ENCODE measurements at regions of chrX and their contacts with region 1.

Region 1: GRCh38 chrX:16695079-16695676 is 17.3 kb downstream of the CTPS2 start:
- DNase-seq: peak; percentile 65
- ATAC-seq: peak; percentile 98
- H3K4me3 ChIP-seq: no peak overlapping the region
- H3K27ac ChIP-seq: no peak overlapping the region
- H3K4me1 ChIP-seq: no peaks in the 10 kb centered on the region
- H3K27me3 ChIP-seq: no peaks in the 10 kb centered on the region
- CTCF ChIP-seq: peak; percentile 82
- POLR2A ChIP-seq: no peak
- RAD21 ChIP-seq: peak; percentile 78

Region 2: DNA sequence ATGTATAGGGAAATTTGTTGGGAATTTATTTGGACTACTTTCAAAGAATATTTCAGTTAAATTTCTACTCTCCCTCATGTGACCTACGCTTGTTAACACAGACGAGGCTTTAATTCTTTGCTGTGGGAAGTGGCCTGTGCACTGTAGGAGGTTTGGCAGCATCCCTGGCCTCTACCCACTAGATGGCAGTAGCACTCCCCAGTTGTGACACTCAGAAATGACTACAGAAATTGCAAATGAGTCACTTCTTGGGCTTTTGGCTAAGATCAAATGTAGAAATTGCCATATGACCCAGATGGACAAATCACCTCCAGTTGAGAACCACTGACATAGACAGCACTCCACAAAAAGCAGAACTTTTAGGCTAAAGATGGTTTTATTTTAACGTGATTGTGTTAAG is 1224.2 kb before region 1 on chrX:
- CTCF ChIA-PET with region 1: no interaction called
- POLR2A ChIA-PET with region 1: no interaction called
- dilution Hi-C with region 1: no loop called
- in situ Hi-C with region 1: loop called (anchors 25 kb)
- intact Hi-C with region 1: loop called (anchors 10 kb)
- DNase-seq: peak; percentile 65
- ATAC-seq: peak; percentile 83
- H3K4me3 ChIP-seq: no peak overlapping the region
- H3K27ac ChIP-seq: no peak overlapping the region
- H3K4me1 ChIP-seq: peaks cover 2% of the 10 kb centered on the region
- H3K27me3 ChIP-seq: peaks cover 2% of the 10 kb centered on the region
- CTCF ChIP-seq: peak; percentile 81
- POLR2A ChIP-seq: no peak
- RAD21 ChIP-seq: peak; percentile 73

Region 3: GRCh38 chrX:15493118-15493962 is 1201.8 kb before region 1 on chrX and contains the start of gene PIR:
- CTCF ChIA-PET with region 1: no interaction called
- POLR2A ChIA-PET with region 1: no interaction called
- dilution Hi-C with region 1: no loop called
- in situ Hi-C with region 1: loop called (anchors 25 kb)
- intact Hi-C with region 1: no loop called
- DNase-seq: peak; percentile 80
- ATAC-seq: peak; percentile 99
- H3K4me3 ChIP-seq: peak within 1 kb of the TSS; percentile 60
- H3K27ac ChIP-seq: peak within 1 kb of the TSS; percentile 63; the same call in 1 of the 2 replicates
- H3K4me1 ChIP-seq: no peaks in the 10 kb centered on the region
- H3K27me3 ChIP-seq: no peaks in the 10 kb centered on the region
- CTCF ChIP-seq: 0 out of 2 replicates have a peak, but pooled peaks have one; percentile 27
- POLR2A ChIP-seq: no peak; the same call in 1 of the 2 replicates
- RAD21 ChIP-seq: no peak
- total RNA-seq, gene PIR: 5.7 and 5.8 TPM in 2 replicates

Region 4: DNA sequence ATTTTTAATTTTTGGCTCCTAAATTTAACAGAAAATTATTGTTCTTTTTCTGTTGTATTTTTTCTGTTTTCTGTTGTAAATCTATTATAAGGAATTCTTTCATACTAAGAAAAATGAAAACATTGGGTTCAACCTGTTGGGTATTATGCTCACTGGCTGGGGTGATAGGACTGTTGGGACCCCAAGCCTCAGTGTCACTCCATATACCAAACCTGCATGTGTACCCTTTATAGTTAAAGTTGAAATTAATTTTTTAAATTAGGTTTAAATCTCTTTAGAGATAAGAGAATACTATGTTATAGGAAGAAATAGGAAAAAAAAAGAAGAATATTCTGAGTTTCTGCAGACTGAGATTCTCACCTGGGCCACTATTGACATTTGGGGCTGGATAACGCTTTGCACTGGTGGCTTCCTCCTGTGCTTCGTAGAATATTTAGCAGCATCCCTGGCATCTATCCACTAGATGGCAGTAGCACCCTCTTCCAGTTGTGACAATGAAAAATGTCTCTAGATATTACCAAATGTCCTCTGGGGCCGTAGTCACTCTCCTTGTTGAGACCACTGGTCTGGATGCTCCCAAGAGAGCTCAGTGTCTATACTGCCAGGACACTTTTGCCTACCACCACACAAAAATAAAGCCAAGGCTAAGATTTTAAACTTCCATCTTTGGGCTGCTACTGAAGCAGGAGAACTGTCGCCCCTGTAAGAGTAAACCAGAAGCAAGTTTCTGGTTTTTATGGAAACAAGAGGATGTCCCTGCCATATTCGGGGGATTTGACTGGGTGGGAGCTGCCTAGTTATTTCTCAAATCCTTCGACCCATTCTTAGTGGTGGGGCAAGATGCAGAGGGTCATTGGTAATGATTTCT is 1008.1 kb before region 1 on chrX:
- CTCF ChIA-PET with region 1: no interaction called
- POLR2A ChIA-PET with region 1: no interaction called
- dilution Hi-C with region 1: no loop called
- in situ Hi-C with region 1: no loop called
- intact Hi-C with region 1: loop called (anchors 10 kb)
- DNase-seq: peak; percentile 61
- ATAC-seq: peak; percentile 91
- H3K4me3 ChIP-seq: no peak overlapping the region
- H3K27ac ChIP-seq: no peak overlapping the region
- H3K4me1 ChIP-seq: no peaks in the 10 kb centered on the region
- H3K27me3 ChIP-seq: no peaks in the 10 kb centered on the region
- CTCF ChIP-seq: peak; percentile 83
- POLR2A ChIP-seq: no peak
- RAD21 ChIP-seq: peak; percentile 67

Region 5: GRCh38 chrX:15761564-15762191 is 933.5 kb before region 1 on chrX:
- CTCF ChIA-PET with region 1: no interaction called
- POLR2A ChIA-PET with region 1: no interaction called
- dilution Hi-C with region 1: no loop called
- in situ Hi-C with region 1: no loop called
- intact Hi-C with region 1: loop called (anchors 5 kb)
- DNase-seq: peak; percentile 41
- ATAC-seq: peak; percentile 86
- H3K4me3 ChIP-seq: no peak overlapping the region
- H3K27ac ChIP-seq: no peak overlapping the region
- H3K4me1 ChIP-seq: no peaks in the 10 kb centered on the region
- H3K27me3 ChIP-seq: no peaks in the 10 kb centered on the region
- CTCF ChIP-seq: peak; percentile 80
- POLR2A ChIP-seq: no peak
- RAD21 ChIP-seq: peak; percentile 76

Region 6: DNA sequence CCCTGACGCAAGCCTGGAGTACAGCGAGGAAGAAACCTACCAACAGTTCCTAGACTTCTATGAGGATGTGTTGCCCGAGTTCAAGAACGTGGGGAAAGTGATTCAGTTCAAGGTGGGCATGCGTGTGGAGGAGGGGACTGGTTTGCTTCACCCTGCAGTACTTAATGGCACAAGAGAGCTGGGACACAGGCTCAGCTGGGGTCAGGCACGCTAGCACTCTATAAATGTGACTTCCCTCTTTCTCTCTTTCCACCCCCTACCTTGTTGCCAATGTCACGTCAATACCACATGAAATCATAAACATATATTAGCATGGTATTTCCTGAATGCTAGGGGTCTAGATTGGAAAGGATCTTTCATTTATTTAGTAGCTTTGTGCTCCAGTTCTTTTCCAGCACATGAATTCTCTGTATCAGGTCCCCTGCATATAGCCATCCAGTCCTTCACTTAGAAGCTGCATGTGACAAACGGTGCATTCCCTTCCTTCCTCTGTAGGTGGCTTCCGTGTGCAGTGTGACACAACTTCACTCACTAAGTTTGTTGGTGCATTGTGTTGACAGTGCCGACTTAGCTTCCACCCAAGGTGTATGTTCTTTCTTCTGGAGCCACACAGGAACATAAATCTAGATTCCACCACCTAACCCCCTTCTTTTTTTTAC is 879.3 kb before region 1 on chrX:
- CTCF ChIA-PET with region 1: no interaction called
- POLR2A ChIA-PET with region 1: no interaction called
- dilution Hi-C with region 1: no loop called
- in situ Hi-C with region 1: loop called (anchors 25 kb)
- intact Hi-C with region 1: no loop called
- DNase-seq: peak; percentile 33
- ATAC-seq: peak; percentile 81
- H3K4me3 ChIP-seq: no peak overlapping the region
- H3K27ac ChIP-seq: no peak overlapping the region
- H3K4me1 ChIP-seq: peaks cover 4% of the 10 kb centered on the region; the same call in 1 of the 2 replicates
- H3K27me3 ChIP-seq: no peaks in the 10 kb centered on the region
- CTCF ChIP-seq: peak; percentile 25; the same call in 1 of the 2 replicates
- POLR2A ChIP-seq: no peak
- RAD21 ChIP-seq: 0 out of 2 replicates have a peak, but pooled peaks have one; percentile 11

Region 7: GRCh38 chrX:16112428-16112827 is 582.8 kb before region 1 on chrX:
- CTCF ChIA-PET with region 1: no interaction called
- POLR2A ChIA-PET with region 1: interaction called, 12 read pairs
- dilution Hi-C with region 1: no loop called
- in situ Hi-C with region 1: no loop called
- intact Hi-C with region 1: no loop called
- DNase-seq: no peak
- ATAC-seq: no peak
- H3K4me3 ChIP-seq: no peak overlapping the region
- H3K27ac ChIP-seq: no peak overlapping the region
- H3K4me1 ChIP-seq: peaks cover 2% of the 10 kb centered on the region
- H3K27me3 ChIP-seq: 0 out of 2 replicates have a peak, but pooled peaks cover 2% of the 10 kb centered on the region
- CTCF ChIP-seq: 0 out of 2 replicates have a peak, but pooled peaks have one; percentile 24
- POLR2A ChIP-seq: no peak
- RAD21 ChIP-seq: 0 out of 2 replicates have a peak, but pooled peaks have one; percentile 8

Region 8: GRCh38 chrX:16612257-16612987 is 82.8 kb before region 1 on chrX:
- CTCF ChIA-PET with region 1: no interaction called
- POLR2A ChIA-PET with region 1: no interaction called
- dilution Hi-C with region 1: no loop called
- in situ Hi-C with region 1: no loop called
- intact Hi-C with region 1: no loop called
- DNase-seq: no peak
- ATAC-seq: no peak
- H3K4me3 ChIP-seq: no peak overlapping the region
- H3K27ac ChIP-seq: no peak overlapping the region
- H3K4me1 ChIP-seq: no peaks in the 10 kb centered on the region; the same call in 1 of the 2 replicates
- H3K27me3 ChIP-seq: 0 out of 2 replicates have a peak, but pooled peaks cover 2% of the 10 kb centered on the region
- CTCF ChIP-seq: no peak
- POLR2A ChIP-seq: no peak
- RAD21 ChIP-seq: no peak

Region 9: GRCh38 chrX:17500145-17500579 is 805.0 kb after region 1 on chrX:
- CTCF ChIA-PET with region 1: no interaction called
- POLR2A ChIA-PET with region 1: no interaction called
- dilution Hi-C with region 1: no loop called
- in situ Hi-C with region 1: no loop called
- intact Hi-C with region 1: no loop called
- DNase-seq: peak; percentile 64
- ATAC-seq: peak; percentile 32; the same call in 1 of the 2 replicates
- H3K4me3 ChIP-seq: no peak overlapping the region
- H3K27ac ChIP-seq: no peak overlapping the region
- H3K4me1 ChIP-seq: no peaks in the 10 kb centered on the region
- H3K27me3 ChIP-seq: peaks cover 4% of the 10 kb centered on the region; the same call in 1 of the 2 replicates
- CTCF ChIP-seq: no peak
- POLR2A ChIP-seq: no peak
- RAD21 ChIP-seq: no peak